Spleen (tissue), 13 donors: ENCODE measurements at regions of chr6 and their contacts with region 1.

Region 1: GRCh38 chr6:87214831-87215230 is 59.5 kb downstream of the ZNF292 start:
- DNase-seq: no peak
- H3K4me3 ChIP-seq: no peak overlapping the region
- H3K27ac ChIP-seq: peak overlapping the region in 1 of 8 donors; percentile 16
- H3K4me1 ChIP-seq: peaks cover 0 to 53% (median 3%) of the 10 kb centered on the region in 6 donors
- H3K27me3 ChIP-seq: no peaks in the 10 kb centered on the region
- CTCF ChIP-seq: no peak
- POLR2A ChIP-seq: no peak

Region 2: GRCh38 chr6:87197547-87197946 is 17.3 kb before region 1 on chr6:
- intact Hi-C with region 1: loop called (anchors 2 kb)
- DNase-seq: no peak
- H3K4me3 ChIP-seq: no peak overlapping the region
- H3K27ac ChIP-seq: no peak overlapping the region
- H3K4me1 ChIP-seq: peaks cover 0 to 74% (median 21%) of the 10 kb centered on the region in 6 donors
- H3K27me3 ChIP-seq: no peaks in the 10 kb centered on the region
- CTCF ChIP-seq: no peak
- POLR2A ChIP-seq: no peak